B cell (primary cell): ENCODE measurements at regions of chr18 and their contacts with region 1.

Region 1: GRCh38 chr18:45540125-45540524 is 75.2 kb upstream of the SLC14A2 start:
- DNase-seq: no peak
- ATAC-seq: no peak
- H3K4me3 ChIP-seq: no peak overlapping the region
- H3K4me3 Mint-ChIP-seq: no peak overlapping the region
- H3K27ac ChIP-seq: no peak overlapping the region
- H3K27ac Mint-ChIP-seq: no peak overlapping the region
- H3K4me1 ChIP-seq: no peaks in the 10 kb centered on the region
- H3K4me1 Mint-ChIP-seq: no peaks in the 10 kb centered on the region
- H3K27me3 ChIP-seq: no peaks in the 10 kb centered on the region
- H3K27me3 Mint-ChIP-seq: peaks cover 12% of the 10 kb centered on the region
- CTCF ChIP-seq: no peak

Region 2: GRCh38 chr18:45553723-45554388 is 13.7 kb after region 1 on chr18:
- CTCF ChIA-PET with region 1: no interaction called
- POLR2A ChIA-PET with region 1: interaction called, 10 read pairs
- intact Hi-C with region 1: no loop called
- DNase-seq: no peak
- ATAC-seq: no peak
- H3K4me3 ChIP-seq: no peak overlapping the region
- H3K4me3 Mint-ChIP-seq: no peak overlapping the region
- H3K27ac ChIP-seq: no peak overlapping the region
- H3K27ac Mint-ChIP-seq: no peak overlapping the region
- H3K4me1 ChIP-seq: no peaks in the 10 kb centered on the region
- H3K4me1 Mint-ChIP-seq: no peaks in the 10 kb centered on the region
- H3K27me3 ChIP-seq: no peaks in the 10 kb centered on the region
- H3K27me3 Mint-ChIP-seq: peaks cover 8% of the 10 kb centered on the region
- CTCF ChIP-seq: no peak